Calu3 (cell line): ENCODE measurements at regions of chr17 and their contacts with region 1.

Region 1: GRCh38 chr17:29148790-29149430 is 31.3 kb downstream of the MYO18A start:
- DNase-seq: peak; percentile 98
- H3K4me3 Mint-ChIP-seq: peak overlapping the region; percentile 56
- H3K27ac Mint-ChIP-seq: peak overlapping the region; percentile 48
- H3K4me1 Mint-ChIP-seq: peaks cover 85% of the 10 kb centered on the region
- H3K27me3 Mint-ChIP-seq: no peaks in the 10 kb centered on the region
- CTCF ChIP-seq: peak; percentile 92

Region 2: DNA sequence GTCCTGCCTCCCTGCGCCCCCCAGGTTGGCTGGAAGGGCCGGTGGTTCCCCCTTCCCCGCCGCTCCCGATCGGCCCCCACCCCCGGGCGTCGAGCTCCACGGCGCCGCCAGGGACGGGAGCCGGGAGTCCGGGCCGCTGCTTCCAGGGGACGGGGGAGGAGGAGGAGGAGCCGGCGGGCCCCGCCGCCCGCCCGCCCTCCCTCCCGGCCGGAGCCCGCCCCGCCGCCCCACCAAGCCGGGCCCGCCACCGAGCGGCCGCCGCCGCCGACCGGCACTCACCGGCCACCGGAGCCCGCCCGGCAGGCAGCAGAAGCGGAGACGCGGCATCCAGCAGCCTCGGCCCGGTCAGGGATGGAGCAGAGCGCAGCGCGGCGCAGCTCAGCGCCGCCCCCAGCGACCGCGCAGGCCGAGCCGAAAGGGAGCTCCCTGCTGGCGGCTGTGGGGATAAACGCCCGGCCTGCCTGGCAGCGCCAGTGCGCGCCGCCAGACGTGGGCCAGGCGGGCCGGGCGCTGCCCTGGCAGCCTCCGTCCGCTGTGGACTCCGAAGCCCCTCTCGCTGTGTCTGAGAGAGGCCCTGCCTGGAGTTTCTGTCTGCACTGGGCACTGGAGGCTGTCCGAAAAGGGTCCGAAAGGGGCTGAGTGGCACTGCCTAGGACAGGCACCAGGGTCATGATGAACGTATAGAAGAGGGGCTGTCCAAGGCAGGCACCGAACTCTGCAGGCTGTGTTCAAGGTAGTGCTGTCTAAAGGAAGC is 31.3 kb after region 1 on chr17 and contains the start of gene MYO18A:
- CTCF ChIA-PET with region 1: interaction called, 158 read pairs
- intact Hi-C with region 1: loop called (anchors 2 kb)
- DNase-seq: peak; percentile 89
- H3K4me3 Mint-ChIP-seq: peak within 1 kb of the TSS; percentile 69
- H3K27ac Mint-ChIP-seq: peak within 1 kb of the TSS; percentile 87
- H3K4me1 Mint-ChIP-seq: peaks cover 38% of the 10 kb centered on the region
- H3K27me3 Mint-ChIP-seq: no peaks in the 10 kb centered on the region
- CTCF ChIP-seq: peak; percentile 92
- total RNA-seq, gene MYO18A: 89.9 and 123 TPM in 2 replicates

Region 3: GRCh38 chr17:29195465-29196081 is 46.7 kb after region 1 on chr17:
- CTCF ChIA-PET with region 1: no interaction called
- intact Hi-C with region 1: no loop called
- DNase-seq: no peak
- H3K4me3 Mint-ChIP-seq: no peak overlapping the region
- H3K27ac Mint-ChIP-seq: no peak overlapping the region
- H3K4me1 Mint-ChIP-seq: peaks cover 7% of the 10 kb centered on the region
- H3K27me3 Mint-ChIP-seq: peaks cover 15% of the 10 kb centered on the region
- CTCF ChIP-seq: no peak

Region 4: GRCh38 chr17:29219378-29220047 is 70.6 kb after region 1 on chr17:
- CTCF ChIA-PET with region 1: interaction called, 28 read pairs
- intact Hi-C with region 1: loop called (anchors 1 kb)
- DNase-seq: peak; percentile 90
- H3K4me3 Mint-ChIP-seq: no peak overlapping the region
- H3K27ac Mint-ChIP-seq: no peak overlapping the region
- H3K4me1 Mint-ChIP-seq: peaks cover 8% of the 10 kb centered on the region
- H3K27me3 Mint-ChIP-seq: peaks cover 10% of the 10 kb centered on the region
- CTCF ChIP-seq: peak; percentile 95

Region 5: DNA sequence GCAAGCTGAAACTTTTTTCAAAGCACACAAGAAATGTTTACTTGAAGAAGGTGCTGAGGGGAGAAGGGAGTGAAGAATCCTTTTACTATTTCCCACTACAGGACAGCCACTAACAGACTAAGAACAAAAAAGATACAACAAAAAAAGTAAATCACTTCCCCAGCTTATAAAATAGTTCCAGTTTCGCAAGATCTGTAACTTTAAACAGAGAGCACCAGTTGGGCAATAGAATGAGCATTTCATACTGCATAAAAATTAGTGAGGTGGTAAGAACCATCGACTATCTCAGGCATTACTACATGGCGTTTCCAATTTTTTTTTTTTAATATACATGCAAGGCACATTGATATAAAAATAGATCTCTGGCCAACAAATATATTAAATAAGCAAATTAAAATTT is 108.8 kb after region 1 on chr17:
- CTCF ChIA-PET with region 1: no interaction called
- intact Hi-C with region 1: no loop called
- DNase-seq: no peak
- H3K4me3 Mint-ChIP-seq: no peak overlapping the region
- H3K27ac Mint-ChIP-seq: no peak overlapping the region
- H3K4me1 Mint-ChIP-seq: peaks cover 18% of the 10 kb centered on the region
- H3K27me3 Mint-ChIP-seq: no peaks in the 10 kb centered on the region
- CTCF ChIP-seq: no peak

Region 6: GRCh38 chr17:29283271-29283895 is 134.5 kb after region 1 on chr17:
- CTCF ChIA-PET with region 1: interaction called, 11 read pairs
- intact Hi-C with region 1: no loop called
- DNase-seq: no peak
- H3K4me3 Mint-ChIP-seq: no peak overlapping the region
- H3K27ac Mint-ChIP-seq: peak overlapping the region; percentile 8
- H3K4me1 Mint-ChIP-seq: peaks cover 30% of the 10 kb centered on the region
- H3K27me3 Mint-ChIP-seq: no peaks in the 10 kb centered on the region
- CTCF ChIP-seq: peak; percentile 20

Region 7: DNA sequence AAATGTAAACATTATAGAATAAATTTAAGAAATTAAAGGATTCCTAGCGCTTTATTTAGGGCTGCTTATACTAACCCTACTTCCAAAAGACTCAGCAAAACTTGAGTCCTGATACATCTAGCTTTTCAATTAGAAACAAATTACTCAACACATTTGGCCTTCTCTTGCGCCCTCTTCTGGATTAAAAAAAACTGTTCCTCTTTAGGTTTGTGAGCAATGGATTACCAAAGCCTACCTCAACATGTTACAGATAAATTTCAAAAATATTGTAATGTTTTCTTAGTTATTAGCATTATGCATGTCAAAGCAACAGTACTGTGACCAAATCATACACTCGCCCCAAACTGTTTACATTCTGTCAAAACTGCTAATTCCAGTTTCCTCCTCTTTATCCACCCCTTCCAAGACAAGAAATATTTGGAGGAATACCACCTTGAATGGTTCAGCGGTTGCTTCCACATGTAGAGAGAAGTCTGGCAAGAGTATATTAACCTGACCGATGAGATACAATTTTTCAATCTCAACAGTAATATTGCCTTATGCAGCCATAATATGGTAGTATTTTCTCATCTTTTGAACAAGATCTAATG is 142.3 kb after region 1 on chr17:
- CTCF ChIA-PET with region 1: interaction called, 9 read pairs
- intact Hi-C with region 1: loop called (anchors 2 kb)
- DNase-seq: peak; percentile 44
- H3K4me3 Mint-ChIP-seq: peak overlapping the region; percentile 90
- H3K27ac Mint-ChIP-seq: peak overlapping the region; percentile 93
- H3K4me1 Mint-ChIP-seq: peaks cover 39% of the 10 kb centered on the region
- H3K27me3 Mint-ChIP-seq: no peaks in the 10 kb centered on the region
- CTCF ChIP-seq: peak; percentile 34